Astrocyte of the cerebellum (primary cell): ENCODE measurements at regions of chr17 and their contacts with region 1.

Region 1: DNA sequence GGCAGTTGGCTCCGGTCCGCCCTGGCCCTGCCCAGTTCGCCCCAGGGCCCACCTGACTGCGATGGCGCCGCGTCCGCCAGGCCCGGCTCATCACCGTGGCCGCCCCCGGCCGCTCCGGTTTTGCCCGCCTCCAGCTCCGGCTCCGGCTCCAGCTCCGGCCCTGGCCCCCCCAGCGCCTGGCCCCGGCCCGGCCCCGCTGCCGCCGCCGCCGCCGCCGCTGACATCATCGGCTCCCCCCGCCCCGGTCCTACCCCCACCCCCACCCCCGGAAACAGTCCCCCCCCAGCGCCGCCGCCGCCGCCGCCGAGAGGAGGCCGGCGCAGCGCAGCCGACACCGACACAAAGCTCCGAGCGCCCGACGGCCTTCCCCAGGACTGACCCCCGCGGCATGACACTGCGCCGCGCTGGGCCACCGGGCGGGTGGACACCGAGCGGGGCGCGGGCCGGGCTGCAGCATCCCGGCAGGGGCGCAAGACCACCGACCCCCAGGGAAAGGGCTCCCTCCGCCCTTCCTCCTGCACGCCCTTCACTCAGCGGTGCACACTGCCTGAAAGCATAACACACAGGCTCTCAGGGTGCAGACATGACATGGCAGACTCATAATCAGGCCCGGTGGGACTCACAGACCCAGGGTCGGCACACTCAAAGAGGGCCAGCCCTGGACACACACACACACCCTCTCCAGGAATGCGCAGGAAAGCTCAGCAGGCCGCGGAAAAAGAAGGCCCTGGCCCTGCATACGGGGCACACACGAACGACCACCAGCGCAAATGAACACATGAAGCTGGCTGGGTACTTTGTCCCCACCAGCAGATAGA is at the start of gene ZBTB4:
- DNase-seq: no peak
- H3K4me3 ChIP-seq: peak within 1 kb of the TSS; percentile 80
- CTCF ChIP-seq: no peak

Region 2: GRCh38 chr17:7384489-7385081 is 95.0 kb before region 1 on chr17:
- in situ Hi-C with region 1: loop called (anchors 5 kb)
- DNase-seq: no peak
- H3K4me3 ChIP-seq: peak overlapping the region; percentile 42
- CTCF ChIP-seq: no peak

Region 3: GRCh38 chr17:7413346-7413985 is 66.1 kb before region 1 on chr17:
- in situ Hi-C with region 1: no loop called
- DNase-seq: no peak
- H3K4me3 ChIP-seq: no peak overlapping the region
- CTCF ChIP-seq: no peak

Region 4: GRCh38 chr17:7429722-7430121 is 49.9 kb before region 1 on chr17:
- in situ Hi-C with region 1: loop called (anchors 5 kb)
- DNase-seq: no peak
- H3K4me3 ChIP-seq: no peak overlapping the region
- CTCF ChIP-seq: no peak

Region 5: GRCh38 chr17:7538891-7539290 is 59.3 kb after region 1 on chr17:
- in situ Hi-C with region 1: loop called (anchors 5 kb)
- DNase-seq: no peak
- H3K4me3 ChIP-seq: no peak overlapping the region
- CTCF ChIP-seq: no peak

Region 6: DNA sequence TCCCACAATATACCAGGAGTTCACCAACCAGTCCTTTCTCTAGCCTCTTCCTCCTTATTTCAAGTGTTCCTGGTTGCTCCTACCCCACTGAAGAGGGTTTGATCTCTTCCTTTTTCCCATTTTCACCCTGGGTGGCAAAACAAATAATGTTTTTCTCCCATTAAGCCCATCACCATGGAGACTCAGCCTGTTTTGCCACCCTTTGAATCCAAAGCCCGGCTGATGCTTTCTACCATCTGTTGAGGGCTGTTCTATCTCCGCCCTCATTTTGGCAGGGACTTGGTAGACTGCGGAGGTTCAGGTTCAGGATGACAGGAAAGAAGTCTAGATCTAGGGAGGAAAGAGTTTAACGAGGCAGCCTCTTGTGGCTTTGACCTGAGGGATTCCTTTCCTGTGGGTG is 240.5 kb after region 1 on chr17:
- in situ Hi-C with region 1: no loop called
- DNase-seq: no peak
- H3K4me3 ChIP-seq: no peak overlapping the region
- CTCF ChIP-seq: no peak